Pancreas (tissue), 10 donors: ENCODE measurements at regions of chr1 and their contacts with region 1.

Region 1: DNA sequence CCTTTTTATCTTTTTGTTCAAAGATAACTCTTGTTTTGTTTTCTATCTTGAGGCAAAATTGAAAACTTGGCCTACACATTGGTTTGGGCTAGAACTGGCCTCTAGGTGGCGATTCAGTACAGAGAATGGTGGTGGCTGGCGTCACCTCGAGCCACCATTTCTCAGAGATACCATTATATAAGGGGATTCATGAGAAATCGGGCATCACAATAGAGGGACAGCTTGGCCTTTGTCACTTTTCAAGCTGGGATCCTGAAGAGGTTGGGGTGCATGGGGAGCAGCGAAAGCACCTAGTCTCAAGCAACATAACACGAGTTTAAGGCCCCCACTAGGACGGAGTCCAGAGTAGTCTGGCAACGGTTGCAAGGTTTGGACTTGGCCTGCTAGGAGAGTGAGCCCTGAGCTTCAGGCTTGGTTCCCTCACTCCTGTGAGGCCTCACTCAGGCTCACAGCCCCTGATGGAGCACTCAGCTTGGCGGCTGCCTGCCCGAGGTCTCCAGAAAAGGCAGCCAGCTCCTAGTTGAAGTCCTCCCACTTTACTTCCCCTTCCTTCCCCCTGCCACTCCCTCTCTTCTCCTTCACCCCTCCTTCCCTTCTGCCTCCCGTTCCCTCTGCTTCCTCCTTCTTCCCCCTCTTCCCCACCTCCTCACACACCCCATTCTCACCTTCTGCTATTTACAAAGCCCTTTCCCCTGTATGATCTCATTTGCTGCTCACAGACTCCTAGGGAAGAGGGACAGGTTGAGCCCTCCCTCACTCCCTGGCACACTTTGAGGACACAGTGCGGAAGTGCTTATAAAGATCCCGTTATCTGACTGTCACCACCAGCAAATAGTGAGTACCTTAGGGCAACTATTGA is 67.8 kb downstream of the LRIG2 start:
- DNase-seq: peak; percentile 47 to 71 (median 56)
- ATAC-seq: peak; percentile 90 to 96 (median 95)
- H3K4me3 ChIP-seq: peak overlapping the region in 1 of 4 donors; percentile 20
- H3K27ac ChIP-seq: peak overlapping the region in 2 of 4 donors; percentile 15 to 50
- H3K4me1 ChIP-seq: peaks cover 0 to 9% (median 7%) of the 10 kb centered on the region in 3 donors
- H3K27me3 ChIP-seq: no peaks in the 10 kb centered on the region
- CTCF ChIP-seq: peak; percentile 47 to 72 (median 65)

Region 2: DNA sequence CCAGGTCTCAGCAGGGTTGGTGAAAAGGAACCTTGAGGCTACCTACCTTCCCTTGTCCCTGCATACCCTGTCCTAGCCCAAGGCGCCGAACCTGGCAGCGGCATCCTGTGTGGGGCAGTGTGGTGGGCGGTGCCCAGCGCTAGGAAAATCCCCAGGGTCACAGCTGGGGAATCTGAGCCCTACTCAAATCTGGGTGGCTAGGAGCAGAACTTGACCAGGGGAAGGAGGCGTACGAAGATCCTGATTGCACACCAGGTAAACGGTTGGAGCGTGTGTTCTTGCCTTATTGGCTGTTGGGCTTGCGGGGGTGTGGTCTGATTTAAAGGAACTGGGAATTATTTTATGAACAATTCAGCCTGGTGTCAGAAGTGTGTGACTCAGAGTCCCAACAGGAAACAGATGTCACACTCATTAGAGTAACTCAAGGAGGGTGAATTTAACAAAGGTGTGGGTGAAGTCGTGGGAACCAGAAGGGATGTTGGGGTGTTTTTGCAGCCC is 50.8 kb after region 1 on chr1:
- intact Hi-C with region 1: no loop called
- DNase-seq: no peak
- ATAC-seq: peak in 3 of 4 donors; percentile 28 to 57 (median 50)
- H3K4me3 ChIP-seq: no peak overlapping the region
- H3K27ac ChIP-seq: no peak overlapping the region
- H3K4me1 ChIP-seq: no peaks in the 10 kb centered on the region
- H3K27me3 ChIP-seq: no peaks in the 10 kb centered on the region
- CTCF ChIP-seq: no peak

Region 3: DNA sequence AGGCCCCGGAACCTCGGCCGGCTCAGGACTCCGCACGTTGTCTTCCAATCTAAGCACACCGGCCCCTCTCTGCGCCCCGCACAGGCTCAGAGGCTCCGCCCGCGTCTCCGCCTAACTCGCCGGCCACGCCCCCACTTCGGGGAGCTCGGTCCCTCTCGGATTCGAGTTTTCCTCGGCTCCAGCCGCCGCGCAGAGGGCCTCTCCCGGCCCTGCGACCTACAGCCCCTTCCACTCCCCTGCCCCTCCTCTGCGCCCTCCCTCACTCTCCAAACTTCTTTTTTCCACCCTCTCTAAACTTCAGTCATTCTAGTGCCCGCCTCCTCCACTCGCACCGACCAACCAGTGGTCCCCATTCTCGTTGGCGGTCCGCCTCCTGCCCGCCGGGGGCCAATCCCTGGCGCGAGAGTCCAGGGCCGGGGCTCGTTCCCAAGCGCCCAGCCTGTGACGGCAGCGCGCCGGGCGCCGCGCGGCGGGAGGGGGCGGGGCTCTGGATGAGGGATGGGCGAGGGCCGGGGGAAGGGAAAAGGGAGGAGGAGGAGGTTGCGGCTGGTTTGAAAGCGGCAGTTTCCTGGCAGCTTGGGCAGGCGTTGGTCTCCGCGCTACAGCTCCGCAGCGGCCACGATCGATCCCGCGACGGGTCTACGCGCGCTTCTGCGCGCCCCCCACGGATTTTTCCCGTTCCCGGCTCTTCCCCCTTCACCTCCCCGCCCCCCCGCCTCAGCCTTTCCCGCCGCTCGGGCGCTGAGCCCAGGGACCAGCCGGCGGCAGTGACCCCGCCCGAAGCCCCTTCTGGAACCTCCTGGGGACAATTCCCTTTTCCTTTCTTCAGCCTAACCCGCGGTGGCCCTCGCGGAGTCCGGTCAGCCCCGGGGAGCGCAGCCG is 249.4 kb after region 1 on chr1 and contains the start of gene MAGI3:
- intact Hi-C with region 1: loop called in 2 of 3 experiments (anchors 10 kb)
- DNase-seq: peak; percentile 98 to 99 (median 98)
- ATAC-seq: peak; percentile 76 to 89 (median 87)
- H3K4me3 ChIP-seq: peak within 1 kb of the TSS; percentile 68 to 92 (median 90)
- H3K27ac ChIP-seq: peak within 1 kb of the TSS; percentile 73 to 97 (median 92)
- H3K4me1 ChIP-seq: peaks cover 6 to 21% (median 17%) of the 10 kb centered on the region in 3 donors
- H3K27me3 ChIP-seq: no peaks in the 10 kb centered on the region
- CTCF ChIP-seq: no peak
- total RNA-seq, gene MAGI3: 11.5 to 24.2 (median 16.4) TPM

Region 4: DNA sequence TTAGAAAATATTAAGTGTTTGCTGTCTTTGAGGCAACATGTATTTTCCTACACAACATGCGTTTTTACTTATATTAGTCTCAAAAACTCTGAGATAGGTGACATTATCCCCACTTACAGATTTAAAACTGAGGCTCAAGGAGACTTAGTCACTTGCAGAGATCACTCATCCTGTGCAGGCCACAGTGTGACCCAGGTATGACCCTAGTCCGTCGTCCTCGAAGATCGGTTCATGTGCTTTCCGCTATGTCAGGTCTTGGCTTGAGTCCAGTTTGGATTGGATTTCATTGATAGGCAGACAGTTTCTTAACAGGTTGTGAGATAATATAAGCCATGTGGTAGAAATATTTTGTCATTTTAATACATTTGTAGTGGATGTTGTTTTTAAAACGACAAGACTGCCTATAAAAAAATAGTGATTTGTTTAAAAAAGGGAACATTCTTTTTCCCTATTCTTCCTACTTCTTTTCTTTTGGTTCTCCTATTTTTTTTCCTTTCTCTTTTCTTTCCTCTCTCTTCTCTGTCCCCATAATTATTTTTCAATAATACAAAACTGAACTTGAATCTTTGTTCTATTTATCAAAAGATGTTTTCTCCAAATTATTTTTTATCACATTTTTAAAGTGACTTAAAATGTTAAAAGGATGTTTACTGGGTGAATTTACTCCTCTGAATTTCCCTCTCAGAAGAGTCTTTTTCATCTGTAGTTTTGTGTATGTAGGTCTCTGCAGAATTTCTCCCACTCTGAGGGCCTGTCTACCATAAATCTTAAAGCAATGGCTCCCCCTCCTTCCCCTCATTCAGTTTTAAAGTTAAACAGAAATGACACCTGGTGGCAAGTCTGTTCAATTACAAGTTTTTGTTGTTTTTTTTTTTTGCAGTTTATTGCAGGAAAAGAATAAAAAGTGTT is 536.7 kb after region 1 on chr1:
- intact Hi-C with region 1: loop called in 2 of 3 experiments (anchors 5 to 10 kb)
- DNase-seq: peak in 3 of 6 donors; percentile 21 to 33 (median 26)
- ATAC-seq: peak; percentile 69 to 82 (median 76)
- H3K4me3 ChIP-seq: no peak overlapping the region
- H3K27ac ChIP-seq: no peak overlapping the region
- H3K4me1 ChIP-seq: peaks cover 5 to 11% (median 8%) of the 10 kb centered on the region in 3 donors
- H3K27me3 ChIP-seq: no peaks in the 10 kb centered on the region
- CTCF ChIP-seq: peak; percentile 18 to 43 (median 26)

Region 5: GRCh38 chr1:113684153-113684541 is 543.3 kb after region 1 on chr1:
- intact Hi-C with region 1: loop called in 2 of 3 experiments (anchors 5 to 10 kb)
- DNase-seq: peak in 2 of 6 donors; percentile 26 to 30
- ATAC-seq: peak in 3 of 4 donors; percentile 51 to 66 (median 64)
- H3K4me3 ChIP-seq: no peak overlapping the region
- H3K27ac ChIP-seq: peak overlapping the region in 1 of 4 donors; percentile 0
- H3K4me1 ChIP-seq: no peaks in the 10 kb centered on the region
- H3K27me3 ChIP-seq: no peaks in the 10 kb centered on the region
- CTCF ChIP-seq: no peak